OCI-LY7 (cell line): ENCODE measurements at regions of chr22 and their contacts with region 1.

Region 1: GRCh38 chr22:19463496-19464469 is 15.2 kb downstream of the UFD1 start:
- DNase-seq: no peak
- H3K4me3 ChIP-seq: no peak overlapping the region
- H3K27ac ChIP-seq: no peak overlapping the region
- H3K4me1 ChIP-seq: no peaks in the 10 kb centered on the region
- CTCF ChIP-seq: no peak

Region 2: DNA sequence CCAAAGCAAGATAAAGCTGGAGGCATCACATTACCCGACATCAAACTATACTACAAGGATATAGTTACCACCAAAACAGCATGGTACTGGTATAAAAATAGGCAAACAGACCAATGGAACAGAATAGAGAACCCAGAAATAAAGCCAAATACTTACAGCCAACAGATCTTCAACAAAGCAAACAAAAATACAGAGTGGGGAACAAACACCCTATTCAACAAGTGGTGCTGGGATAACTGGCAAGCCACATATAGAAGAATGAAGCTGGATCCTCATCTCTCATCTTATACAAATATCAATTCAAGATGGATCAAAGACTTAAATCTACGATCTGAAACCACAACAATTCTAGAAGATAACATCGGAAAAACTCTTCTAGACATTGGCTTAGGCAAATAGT is 122.3 kb before region 1 on chr22:
- CTCF ChIA-PET with region 1: no interaction called
- POLR2A ChIA-PET with region 1: no interaction called
- intact Hi-C with region 1: loop called (anchors 10 kb)
- DNase-seq: no peak
- H3K4me3 ChIP-seq: no peak overlapping the region
- H3K27ac ChIP-seq: no peak overlapping the region
- H3K4me1 ChIP-seq: no peaks in the 10 kb centered on the region
- CTCF ChIP-seq: no peak